ENCODE measurements at regions of chr2 and their contacts with region 1.

Region 1: DNA sequence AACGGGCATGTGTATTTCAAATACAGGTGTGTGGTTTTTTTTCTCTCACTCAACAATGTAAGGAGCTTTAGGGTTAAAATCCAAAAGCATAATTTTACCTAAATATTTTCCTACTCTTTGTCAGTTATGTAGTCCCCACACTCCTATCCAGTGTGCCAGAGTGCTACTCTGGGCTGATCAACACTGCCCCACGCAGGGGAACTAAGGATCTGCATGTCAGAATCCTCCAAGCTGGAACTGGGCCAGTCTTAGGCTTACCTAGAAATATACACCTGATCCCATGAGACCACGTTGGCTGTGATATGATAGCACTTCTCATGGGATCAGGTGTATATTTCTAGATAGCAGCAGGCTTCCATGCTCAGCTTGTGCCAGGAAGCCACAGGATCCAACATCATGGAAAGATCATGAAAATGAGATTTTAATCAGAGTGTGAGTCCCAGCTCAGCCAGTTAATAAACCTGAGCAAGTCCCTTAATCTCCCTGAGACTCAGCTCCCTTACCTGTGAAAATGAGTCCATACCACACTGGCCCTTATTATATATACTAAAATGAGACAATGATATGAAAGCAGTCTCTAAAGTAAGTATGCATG is 29.7 kb downstream of the CCDC141 start:
- DNase-seq: peak; percentile 31
- ATAC-seq: peak; percentile 64
- H3K4me3 Mint-ChIP-seq: no peak overlapping the region
- H3K27ac Mint-ChIP-seq: peak overlapping the region; percentile 46
- H3K4me1 Mint-ChIP-seq: peaks cover 52% of the 10 kb centered on the region
- H3K27me3 Mint-ChIP-seq: no peaks in the 10 kb centered on the region
- CTCF ChIP-seq: no peak

Region 2: GRCh38 chr2:178891265-178891958 is 128.8 kb before region 1 on chr2:
- CTCF ChIA-PET with region 1: interaction called, 24 read pairs
- POLR2A ChIA-PET with region 1: interaction called, 4 read pairs
- intact Hi-C with region 1: loop called (anchors 1 kb)
- DNase-seq: no peak
- ATAC-seq: peak; percentile 76
- H3K4me3 Mint-ChIP-seq: no peak overlapping the region
- H3K27ac Mint-ChIP-seq: no peak overlapping the region
- H3K4me1 Mint-ChIP-seq: no peaks in the 10 kb centered on the region
- H3K27me3 Mint-ChIP-seq: no peaks in the 10 kb centered on the region
- CTCF ChIP-seq: peak; percentile 64

Region 3: GRCh38 chr2:178962805-178963433 is 57.3 kb before region 1 on chr2:
- CTCF ChIA-PET with region 1: interaction called, 5 read pairs
- POLR2A ChIA-PET with region 1: no interaction called
- intact Hi-C with region 1: loop called (anchors 1 kb)
- DNase-seq: no peak
- ATAC-seq: peak; percentile 84
- H3K4me3 Mint-ChIP-seq: no peak overlapping the region
- H3K27ac Mint-ChIP-seq: no peak overlapping the region
- H3K4me1 Mint-ChIP-seq: peaks cover 7% of the 10 kb centered on the region
- H3K27me3 Mint-ChIP-seq: no peaks in the 10 kb centered on the region
- CTCF ChIP-seq: no peak

Region 4: GRCh38 chr2:179049546-179050311 is 29.5 kb after region 1 on chr2 and contains the start of gene CCDC141:
- CTCF ChIA-PET with region 1: interaction called, 8 read pairs
- POLR2A ChIA-PET with region 1: interaction called, 39 read pairs
- intact Hi-C with region 1: loop called (anchors 1 kb)
- DNase-seq: peak; percentile 26
- ATAC-seq: peak; percentile 86
- H3K4me3 Mint-ChIP-seq: peak within 1 kb of the TSS; percentile 89
- H3K27ac Mint-ChIP-seq: peak within 1 kb of the TSS; percentile 96
- H3K4me1 Mint-ChIP-seq: peaks cover 59% of the 10 kb centered on the region
- H3K27me3 Mint-ChIP-seq: no peaks in the 10 kb centered on the region
- CTCF ChIP-seq: no peak
- total RNA-seq, gene CCDC141: 32.1 and 38.8 TPM in 2 replicates

Region 5: GRCh38 chr2:179129574-179130238 is 109.5 kb after region 1 on chr2:
- CTCF ChIA-PET with region 1: interaction called, 57 read pairs
- POLR2A ChIA-PET with region 1: interaction called, 4 read pairs
- intact Hi-C with region 1: loop called (anchors 1 kb)
- DNase-seq: no peak
- ATAC-seq: no peak
- H3K4me3 Mint-ChIP-seq: no peak overlapping the region
- H3K27ac Mint-ChIP-seq: no peak overlapping the region
- H3K4me1 Mint-ChIP-seq: peaks cover 2% of the 10 kb centered on the region
- H3K27me3 Mint-ChIP-seq: no peaks in the 10 kb centered on the region
- CTCF ChIP-seq: no peak

Region 6: DNA sequence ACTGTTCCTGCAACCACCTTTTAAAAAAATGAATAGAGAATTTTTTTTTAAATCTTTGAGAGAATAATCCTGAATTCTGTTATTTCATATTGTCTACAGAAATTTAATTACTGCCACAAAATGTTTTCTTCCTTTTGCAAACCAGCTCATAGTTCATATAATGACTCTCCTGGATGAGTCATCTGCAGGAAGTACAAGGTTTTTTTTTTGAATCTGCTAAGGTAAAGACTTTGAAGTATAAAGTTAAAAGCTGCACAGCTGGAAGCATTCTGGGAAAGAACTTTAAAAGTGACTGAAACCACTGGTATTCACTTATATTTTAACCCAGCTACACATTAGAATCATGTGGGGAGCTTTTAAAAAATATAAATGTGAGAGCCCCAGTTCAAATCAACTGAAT is 218.9 kb after region 1 on chr2:
- CTCF ChIA-PET with region 1: no interaction called
- POLR2A ChIA-PET with region 1: no interaction called
- intact Hi-C with region 1: no loop called
- DNase-seq: no peak
- ATAC-seq: peak; percentile 61
- H3K4me3 Mint-ChIP-seq: peak overlapping the region; percentile 0
- H3K27ac Mint-ChIP-seq: peak overlapping the region; percentile 19
- H3K4me1 Mint-ChIP-seq: peaks cover 79% of the 10 kb centered on the region
- H3K27me3 Mint-ChIP-seq: no peaks in the 10 kb centered on the region
- CTCF ChIP-seq: no peak

Measured in activated B cell treated with CpG ODN at 0.5 μM for 24 hours (primary cell).